ENCODE measurements at regions of chr3 and their contacts with region 1.

Region 1: GRCh38 chr3:4712143-4712542 is 219.0 kb downstream of the ITPR1 start:
- DNase-seq: no peak
- H3K4me3 ChIP-seq: no peak overlapping the region
- H3K27ac ChIP-seq: no peak overlapping the region
- H3K27me3 ChIP-seq: no peaks in the 10 kb centered on the region
- CTCF ChIP-seq: no peak

Region 2: GRCh38 chr3:3815206-3815605 is 896.9 kb before region 1 on chr3:
- CTCF ChIA-PET with region 1: no interaction called
- POLR2A ChIA-PET with region 1: no interaction called
- DNase-seq: no peak
- H3K4me3 ChIP-seq: no peak overlapping the region
- H3K27ac ChIP-seq: no peak overlapping the region
- H3K27me3 ChIP-seq: no peaks in the 10 kb centered on the region
- CTCF ChIP-seq: no peak

Region 3: DNA sequence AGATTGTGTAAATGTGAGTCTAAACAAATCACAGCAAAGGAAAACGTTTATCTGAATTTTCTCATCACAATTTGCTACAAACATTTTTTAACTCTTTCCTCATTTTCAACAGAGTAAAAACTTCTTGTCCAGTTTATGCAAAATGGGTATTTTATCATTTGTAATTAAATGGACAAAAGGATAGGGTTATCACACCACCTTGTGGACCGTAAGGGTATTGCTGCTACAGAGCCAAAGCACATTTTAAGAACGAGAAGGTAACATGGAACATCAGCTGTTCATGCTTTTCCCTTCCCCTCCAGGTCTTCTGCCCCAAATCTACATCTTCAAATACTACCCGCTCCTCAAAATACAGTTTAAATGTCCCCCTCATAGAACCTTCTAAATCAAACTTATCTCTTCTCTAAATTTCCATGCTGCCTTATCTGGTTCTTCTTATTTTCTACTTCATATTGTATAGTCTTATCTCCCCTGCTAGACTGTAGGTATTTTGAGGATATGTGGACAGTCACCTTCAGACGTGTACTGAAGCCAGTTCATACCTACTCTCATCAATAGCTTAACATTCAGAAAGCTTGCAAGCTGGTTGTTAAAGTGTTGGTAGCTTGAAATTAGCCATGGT is 421.8 kb before region 1 on chr3:
- CTCF ChIA-PET with region 1: no interaction called
- POLR2A ChIA-PET with region 1: no interaction called
- DNase-seq: no peak
- H3K4me3 ChIP-seq: no peak overlapping the region
- H3K27ac ChIP-seq: no peak overlapping the region
- H3K27me3 ChIP-seq: no peaks in the 10 kb centered on the region
- CTCF ChIP-seq: peak; percentile 93

Region 4: DNA sequence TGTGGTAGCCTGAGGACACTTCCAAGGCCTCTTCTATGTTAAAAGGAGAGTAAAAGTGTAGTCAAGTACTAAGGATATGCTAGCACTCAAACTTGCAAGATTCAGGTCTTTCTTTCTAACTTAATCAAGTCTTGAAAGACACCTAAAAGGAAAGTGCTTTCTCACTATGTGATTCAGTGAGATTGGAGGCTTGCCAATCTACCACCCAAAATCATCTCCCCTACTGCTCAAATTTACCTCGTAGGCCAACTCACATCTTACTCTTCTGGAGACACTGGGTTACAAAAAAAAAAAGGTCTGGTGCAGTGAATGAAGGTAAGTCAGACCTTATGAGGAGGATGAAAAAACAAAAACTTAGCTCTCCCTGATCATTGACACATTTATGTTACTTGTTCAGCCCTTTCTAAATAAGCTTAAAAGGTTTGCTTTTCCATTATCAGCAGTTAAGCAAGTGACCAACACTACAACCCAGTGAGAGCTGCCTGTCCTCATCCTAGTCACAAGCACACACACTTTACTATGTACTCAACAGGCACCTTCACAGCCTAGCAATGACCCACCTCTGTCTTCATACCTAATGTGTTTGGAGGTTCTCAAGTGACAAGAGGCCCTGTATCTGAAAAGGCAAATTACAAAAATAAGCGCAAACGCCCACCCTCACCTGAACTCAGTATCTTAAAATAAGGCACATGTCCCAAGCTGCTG is 264.7 kb before region 1 on chr3:
- CTCF ChIA-PET with region 1: no interaction called
- POLR2A ChIA-PET with region 1: no interaction called
- DNase-seq: no peak
- H3K4me3 ChIP-seq: no peak overlapping the region
- H3K27ac ChIP-seq: no peak overlapping the region
- H3K27me3 ChIP-seq: no peaks in the 10 kb centered on the region
- CTCF ChIP-seq: no peak

Region 5: DNA sequence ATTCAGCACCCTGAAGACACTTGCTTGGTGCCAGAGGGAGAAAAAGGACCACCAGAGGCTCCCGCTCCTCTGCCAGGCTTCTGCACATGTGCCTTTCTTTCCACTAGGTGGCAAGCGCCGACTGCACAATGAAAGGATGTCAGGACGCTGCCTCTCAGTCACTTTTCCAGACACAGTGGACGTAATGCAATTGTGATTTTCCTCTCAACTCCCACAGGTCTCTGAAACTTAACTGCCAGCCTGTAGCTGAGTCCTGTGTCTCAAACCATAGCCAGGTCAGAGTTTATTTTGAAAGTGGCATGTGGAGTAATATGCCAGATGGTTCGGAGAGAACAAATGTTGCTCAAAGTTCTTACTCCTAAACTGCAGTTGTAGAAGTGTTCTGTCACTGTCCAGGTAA is 56.1 kb before region 1 on chr3:
- CTCF ChIA-PET with region 1: interaction called, 16 read pairs
- POLR2A ChIA-PET with region 1: no interaction called
- DNase-seq: peak; percentile 44
- H3K4me3 ChIP-seq: no peak overlapping the region
- H3K27ac ChIP-seq: no peak overlapping the region
- H3K27me3 ChIP-seq: no peaks in the 10 kb centered on the region
- CTCF ChIP-seq: peak; percentile 98

Region 6: DNA sequence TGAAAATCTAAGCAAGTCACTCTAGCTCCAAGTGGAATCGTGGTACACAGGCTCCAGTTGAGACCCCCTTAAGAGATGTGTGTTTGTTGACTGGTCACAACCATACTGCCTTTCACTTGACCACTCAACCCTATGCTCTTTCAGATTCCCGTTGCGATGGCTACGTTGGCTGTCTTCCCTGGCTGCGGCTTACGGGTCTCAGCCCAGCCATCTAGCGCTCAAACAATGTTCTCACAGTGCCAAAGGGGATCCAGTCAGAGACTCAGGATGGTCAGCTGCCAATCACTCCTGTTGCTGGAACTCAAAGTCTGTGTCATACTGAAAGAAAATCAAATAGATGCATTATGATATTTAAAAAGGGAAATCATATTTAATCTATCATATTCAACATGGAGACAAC is 18.6 kb after region 1 on chr3:
- CTCF ChIA-PET with region 1: interaction called, 17 read pairs
- POLR2A ChIA-PET with region 1: no interaction called
- DNase-seq: no peak
- H3K4me3 ChIP-seq: no peak overlapping the region
- H3K27ac ChIP-seq: no peak overlapping the region
- H3K27me3 ChIP-seq: no peaks in the 10 kb centered on the region
- CTCF ChIP-seq: no peak

Region 7: DNA sequence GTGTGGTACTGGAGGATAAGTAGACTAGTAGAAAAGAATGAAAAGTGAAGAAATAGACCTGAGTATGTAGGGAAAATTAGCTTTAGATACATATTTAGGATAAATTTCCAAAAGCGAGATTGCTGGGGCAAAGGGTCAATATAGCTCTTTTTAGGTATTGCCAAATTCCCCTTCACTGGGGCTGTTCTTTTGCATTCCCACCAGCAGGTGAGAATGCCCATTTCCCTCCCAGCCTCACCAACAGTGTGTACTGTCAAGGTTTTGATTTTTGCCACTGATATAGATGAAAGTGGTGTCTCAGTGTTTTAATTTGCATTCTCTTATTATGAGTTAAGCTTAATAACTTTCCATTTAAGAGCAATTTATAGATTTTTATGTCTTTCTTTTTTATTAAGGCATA is 231.4 kb after region 1 on chr3:
- CTCF ChIA-PET with region 1: no interaction called
- POLR2A ChIA-PET with region 1: no interaction called
- DNase-seq: no peak
- H3K4me3 ChIP-seq: no peak overlapping the region
- H3K27ac ChIP-seq: no peak overlapping the region
- H3K27me3 ChIP-seq: no peaks in the 10 kb centered on the region
- CTCF ChIP-seq: peak; percentile 44

Region 8: DNA sequence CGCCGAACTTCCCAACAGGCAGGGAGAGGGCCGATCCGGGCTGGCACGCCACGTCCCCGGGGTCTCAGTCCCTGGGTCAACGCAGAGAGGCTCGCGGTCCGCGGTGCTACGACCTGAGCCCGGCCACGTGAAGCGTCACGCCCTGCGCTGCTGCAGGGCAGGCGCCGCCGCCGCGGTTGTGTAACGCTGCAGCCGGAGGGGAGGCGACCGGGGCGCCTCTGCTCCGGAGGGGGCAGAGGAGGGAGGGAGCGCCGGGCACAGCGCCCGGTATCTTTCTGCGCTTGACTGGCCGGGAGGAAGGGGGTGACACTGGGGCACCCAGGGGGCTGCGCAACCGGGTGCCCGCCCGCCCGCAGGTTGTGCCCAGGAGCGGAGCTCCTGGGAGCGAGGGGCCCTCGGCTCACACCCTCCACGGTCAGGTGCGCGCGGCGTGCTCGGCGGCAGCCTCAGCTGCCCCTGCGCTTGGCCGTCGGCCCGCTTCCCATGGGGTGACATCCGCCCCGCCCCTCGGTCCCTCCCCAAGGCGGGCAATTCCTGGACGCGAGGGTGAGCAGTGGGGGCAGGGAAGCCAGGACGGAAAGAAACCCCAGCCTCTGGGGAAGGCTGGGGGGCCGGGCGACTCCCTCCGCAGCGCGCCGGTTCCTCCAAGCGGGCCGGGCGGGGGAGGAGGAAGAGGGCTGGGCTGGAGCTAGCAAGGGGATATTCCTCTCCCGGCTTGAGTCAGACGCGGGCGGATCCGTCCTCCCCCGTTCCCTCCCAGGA is 266.2 kb after region 1 on chr3:
- CTCF ChIA-PET with region 1: interaction called, 129 read pairs
- POLR2A ChIA-PET with region 1: interaction called, 10 read pairs
- DNase-seq: peak; percentile 92
- H3K4me3 ChIP-seq: peak overlapping the region; percentile 92
- H3K27ac ChIP-seq: peak overlapping the region; percentile 93
- H3K27me3 ChIP-seq: no peaks in the 10 kb centered on the region
- CTCF ChIP-seq: no peak

Region 9: GRCh38 chr3:5026331-5027218 is 314.4 kb after region 1 on chr3:
- CTCF ChIA-PET with region 1: interaction called, 135 read pairs
- POLR2A ChIA-PET with region 1: no interaction called
- DNase-seq: peak; percentile 80
- H3K4me3 ChIP-seq: peak overlapping the region; percentile 61
- H3K27ac ChIP-seq: peak overlapping the region; percentile 87
- H3K27me3 ChIP-seq: no peaks in the 10 kb centered on the region
- CTCF ChIP-seq: peak; percentile 80

Region 10: DNA sequence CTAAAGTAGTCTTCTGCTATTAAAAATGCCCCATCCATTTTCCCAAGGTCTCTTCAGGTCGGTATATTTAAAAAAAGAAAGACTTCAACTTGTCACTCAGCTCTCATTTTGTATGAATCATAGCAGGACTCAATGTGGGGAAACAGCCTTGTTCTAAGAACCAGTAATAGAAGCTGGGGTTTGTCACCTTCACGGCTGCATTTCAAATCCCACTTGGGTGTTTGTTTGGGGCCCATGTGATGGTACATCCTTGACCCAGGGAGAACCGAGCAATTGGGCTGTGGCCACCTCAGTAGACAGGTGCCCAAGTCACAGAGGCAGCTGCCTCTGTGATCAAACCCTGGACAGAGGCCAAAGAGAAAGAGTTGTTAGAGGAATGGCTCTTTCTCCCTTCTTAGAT is 339.6 kb after region 1 on chr3:
- CTCF ChIA-PET with region 1: interaction called, 184 read pairs
- POLR2A ChIA-PET with region 1: interaction called, 3 read pairs
- DNase-seq: no peak
- H3K4me3 ChIP-seq: no peak overlapping the region
- H3K27ac ChIP-seq: no peak overlapping the region
- H3K27me3 ChIP-seq: no peaks in the 10 kb centered on the region
- CTCF ChIP-seq: no peak

Region 11: DNA sequence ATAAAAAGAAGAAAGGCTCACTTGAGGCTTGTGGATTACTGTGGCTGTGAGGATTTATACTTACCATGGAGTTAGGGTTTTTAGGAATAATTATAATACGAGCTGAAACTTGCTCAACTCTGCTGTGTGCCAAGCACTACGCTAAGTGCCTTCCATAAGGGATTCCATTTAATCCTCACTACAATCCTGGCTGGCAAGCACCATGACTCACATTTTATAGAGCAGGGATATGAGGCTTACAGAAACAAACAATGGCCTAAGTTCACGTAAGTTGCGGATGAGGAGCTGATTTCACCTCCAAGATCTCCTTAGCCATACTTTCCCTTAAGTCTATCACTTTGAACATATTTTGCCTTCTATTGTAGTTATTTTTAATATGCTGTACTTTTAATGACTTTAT is 366.0 kb after region 1 on chr3:
- CTCF ChIA-PET with region 1: interaction called, 15 read pairs
- POLR2A ChIA-PET with region 1: no interaction called
- DNase-seq: peak; percentile 20
- H3K4me3 ChIP-seq: no peak overlapping the region
- H3K27ac ChIP-seq: no peak overlapping the region
- H3K27me3 ChIP-seq: peaks cover 9% of the 10 kb centered on the region
- CTCF ChIP-seq: no peak

Measured in AG04450 (cell line).